ENCODE measurements at regions of chr1 and their contacts with region 1.

Region 1: GRCh38 chr1:39378377-39378776 is 113.1 kb upstream of the BMP8A start:
- DNase-seq: no peak
- H3K4me3 ChIP-seq: no peak overlapping the region
- H3K27ac ChIP-seq: no peak overlapping the region
- H3K4me1 ChIP-seq: peaks cover 24% of the 10 kb centered on the region
- H3K27me3 ChIP-seq: no peaks in the 10 kb centered on the region
- CTCF ChIP-seq: peak; percentile 4 to 17
- POLR2A ChIP-seq: no peak

Region 2: GRCh38 chr1:39391691-39392679 is 13.6 kb after region 1 on chr1:
- CTCF ChIA-PET with region 1: interaction called, 13 read pairs
- POLR2A ChIA-PET with region 1: interaction called, 4 read pairs
- dilution Hi-C with region 1: no loop called
- intact Hi-C with region 1: no loop called
- DNase-seq: peak; percentile 93
- H3K4me3 ChIP-seq: peak overlapping the region in 1 of 3 experiments; percentile 57
- H3K27ac ChIP-seq: peak overlapping the region; percentile 99
- H3K4me1 ChIP-seq: peaks cover 78% of the 10 kb centered on the region
- H3K27me3 ChIP-seq: no peaks in the 10 kb centered on the region
- CTCF ChIP-seq: no peak
- POLR2A ChIP-seq: peak; percentile 36

Region 3: DNA sequence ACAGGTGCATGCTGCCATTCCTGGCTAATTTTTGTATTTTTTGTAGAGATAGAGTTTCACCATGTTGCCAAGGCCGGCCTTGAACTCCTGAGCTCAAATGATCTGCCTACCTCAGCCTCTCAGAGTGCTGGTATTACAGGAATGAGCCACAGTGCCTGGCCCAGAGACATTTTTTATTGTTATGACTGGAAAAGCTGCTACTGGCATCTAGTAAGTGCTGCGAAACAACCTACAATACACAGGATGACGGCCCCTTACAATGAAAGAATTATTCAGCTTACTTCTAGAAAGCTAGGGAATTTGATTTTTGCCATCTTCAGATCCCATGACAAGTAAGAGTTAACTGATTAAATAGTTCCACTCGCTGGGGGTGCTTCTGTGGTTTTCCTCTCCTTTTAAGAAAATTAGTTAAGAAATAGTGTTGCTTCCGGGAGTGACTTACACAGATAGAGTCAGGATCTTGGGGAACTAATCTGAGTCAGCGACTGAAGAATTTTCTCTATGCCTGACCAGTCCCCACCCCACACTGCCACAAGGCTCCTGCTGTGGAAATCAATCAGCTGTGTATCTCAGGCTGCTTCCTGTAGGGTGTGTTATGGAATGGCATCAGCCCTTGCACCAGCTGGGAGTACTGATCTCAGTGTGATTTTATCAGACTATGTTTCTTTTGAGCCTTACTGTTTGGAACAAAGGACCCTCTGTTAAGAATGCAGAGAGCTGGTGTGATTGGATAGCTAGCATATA is 20.1 kb after region 1 on chr1:
- CTCF ChIA-PET with region 1: interaction called, 7 read pairs
- POLR2A ChIA-PET with region 1: interaction called, 4 read pairs
- dilution Hi-C with region 1: no loop called
- intact Hi-C with region 1: loop called (anchors 2 kb)
- DNase-seq: peak; percentile 95
- H3K4me3 ChIP-seq: peak overlapping the region in 1 of 3 experiments; percentile 19
- H3K27ac ChIP-seq: peak overlapping the region; percentile 85
- H3K4me1 ChIP-seq: peaks cover 63% of the 10 kb centered on the region
- H3K27me3 ChIP-seq: no peaks in the 10 kb centered on the region
- CTCF ChIP-seq: no peak
- POLR2A ChIP-seq: peak; percentile 64

Region 4: DNA sequence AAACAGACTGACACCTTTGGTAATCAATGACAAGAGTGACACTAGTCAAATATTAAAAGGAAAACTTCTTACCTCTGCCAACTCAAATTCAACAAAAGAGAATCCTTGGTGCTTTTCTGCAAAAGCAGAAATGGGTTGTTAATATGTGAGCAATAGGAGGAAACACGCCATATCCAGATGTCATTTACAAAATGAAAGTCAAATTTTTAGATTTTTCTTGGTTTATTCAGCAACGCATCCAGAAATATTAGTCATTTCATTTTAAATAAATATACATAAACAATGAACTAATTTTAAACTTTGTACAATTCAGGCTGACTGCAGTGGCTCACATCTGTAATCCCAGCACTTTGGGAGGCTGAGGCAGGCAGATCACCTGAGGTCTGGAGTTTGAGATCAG is 175.9 kb after region 1 on chr1:
- CTCF ChIA-PET with region 1: no interaction called
- POLR2A ChIA-PET with region 1: no interaction called
- dilution Hi-C with region 1: no loop called
- intact Hi-C with region 1: no loop called
- DNase-seq: no peak
- H3K4me3 ChIP-seq: no peak overlapping the region
- H3K27ac ChIP-seq: no peak overlapping the region
- H3K4me1 ChIP-seq: no peaks in the 10 kb centered on the region
- H3K27me3 ChIP-seq: no peaks in the 10 kb centered on the region
- CTCF ChIP-seq: no peak
- POLR2A ChIP-seq: no peak

Measured in endothelial cell of umbilical vein (primary cell).